Sigmoid colon (tissue), 7 donors: ENCODE measurements at regions of chr5 and their contacts with region 1.

Region 1: DNA sequence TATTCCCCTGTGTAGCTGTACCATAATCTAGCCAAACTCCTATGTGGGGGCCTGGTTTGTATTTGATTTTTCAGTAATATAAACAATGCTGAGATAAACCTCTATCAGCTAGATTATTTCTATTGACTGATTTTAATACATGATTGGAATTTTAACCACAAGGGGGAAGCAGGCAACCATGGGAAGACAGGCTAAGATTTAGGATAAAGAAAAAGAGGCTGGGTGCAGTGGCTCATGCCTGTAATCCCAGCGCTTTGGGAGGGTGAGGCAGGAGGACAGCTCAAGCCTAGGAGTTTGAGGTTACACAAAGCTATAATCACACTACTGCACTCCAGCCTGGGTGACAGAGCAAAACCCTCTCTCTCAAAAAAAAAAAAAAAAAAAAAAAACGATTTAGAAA is 18.1 kb upstream of the GPX3 start:
- DNase-seq: no peak
- H3K4me3 ChIP-seq: no peak overlapping the region
- H3K27ac ChIP-seq: no peak overlapping the region
- H3K4me1 ChIP-seq: peaks cover 0 to 37% (median 30%) of the 10 kb centered on the region in 4 donors
- H3K27me3 ChIP-seq: no peaks in the 10 kb centered on the region
- CTCF ChIP-seq: peak; percentile 24 to 55 (median 48)
- EP300 ChIP-seq: no peak
- POLR2A ChIP-seq: no peak

Region 2: DNA sequence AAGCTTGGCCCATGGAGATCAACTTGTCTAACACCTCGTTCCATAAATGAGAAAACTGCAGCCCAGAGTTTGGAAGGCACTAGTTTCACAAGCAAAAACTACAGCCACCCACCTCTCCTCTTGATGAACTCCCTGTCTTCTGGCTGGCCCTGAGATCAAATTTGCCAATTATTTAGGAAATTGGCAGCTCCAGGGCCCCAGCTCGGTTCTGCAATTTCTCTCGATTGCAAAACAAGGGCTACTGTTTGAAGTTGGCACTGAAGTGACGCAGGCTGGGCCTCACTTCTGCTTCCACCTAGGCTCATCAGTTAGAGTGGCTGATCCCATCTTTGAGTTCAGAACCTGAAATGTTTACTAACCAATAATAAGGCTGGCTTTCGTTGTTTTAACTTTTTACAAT is 14.4 kb after region 1 on chr5:
- intact Hi-C with region 1: no loop called
- DNase-seq: peak; percentile 87
- H3K4me3 ChIP-seq: no peak overlapping the region
- H3K27ac ChIP-seq: peak overlapping the region; percentile 13 to 71 (median 44)
- H3K4me1 ChIP-seq: peaks cover 0 to 19% (median 9%) of the 10 kb centered on the region in 4 donors
- H3K27me3 ChIP-seq: no peaks in the 10 kb centered on the region
- CTCF ChIP-seq: no peak
- EP300 ChIP-seq: no peak
- POLR2A ChIP-seq: no peak

Region 3: GRCh38 chr5:151115274-151115905 is 113.1 kb after region 1 on chr5:
- intact Hi-C with region 1: loop called (anchors 2 kb)
- DNase-seq: peak; percentile 88
- H3K4me3 ChIP-seq: no peak overlapping the region
- H3K27ac ChIP-seq: peak overlapping the region in 2 of 4 donors; percentile 37 to 39
- H3K4me1 ChIP-seq: peaks cover 0 to 11% (median 3%) of the 10 kb centered on the region in 4 donors
- H3K27me3 ChIP-seq: no peaks in the 10 kb centered on the region
- CTCF ChIP-seq: peak; percentile 84 to 98 (median 96)
- EP300 ChIP-seq: no peak
- POLR2A ChIP-seq: no peak